ENCODE measurements at regions of chr11 and their contacts with region 1.

Region 1: GRCh38 chr11:65095974-65096806 is at the start of gene VPS51:
- DNase-seq: peak; percentile 88
- ATAC-seq: peak; percentile 97
- H3K4me3 ChIP-seq: peak within 1 kb of the TSS; percentile 74 to 78
- H3K27ac ChIP-seq: peak within 1 kb of the TSS; percentile 63
- H3K4me1 ChIP-seq: peaks cover 3 to 12% of the 10 kb centered on the region in 2 experiments; a peak in 3 of 4 replicates
- H3K27me3 ChIP-seq: no peaks in the 10 kb centered on the region
- CTCF ChIP-seq: no peak
- POLR2A ChIP-seq: peak; percentile 94
- RAD21 ChIP-seq: no peak
- total RNA-seq, gene VPS51: 89.5 TPM

Region 2: GRCh38 chr11:65083834-65084597 is 12.2 kb before region 1 on chr11 and contains the starts of genes CDCA5 and ZFPL1:
- CTCF ChIA-PET with region 1: no interaction called
- POLR2A ChIA-PET with region 1: no interaction called
- RAD21 ChIA-PET with region 1: no interaction called
- intact Hi-C with region 1: loop called (anchors 1 kb)
- DNase-seq: peak; percentile 91
- ATAC-seq: peak; percentile 85
- H3K4me3 ChIP-seq: peak within 1 kb of the TSS; percentile 86 to 98
- H3K27ac ChIP-seq: peak within 1 kb of the TSS; percentile 82
- H3K4me1 ChIP-seq: peaks cover 7 to 22% of the 10 kb centered on the region in 2 experiments; a peak in 3 of 4 replicates
- H3K27me3 ChIP-seq: no peaks in the 10 kb centered on the region
- CTCF ChIP-seq: no peak
- POLR2A ChIP-seq: peak; percentile 49
- RAD21 ChIP-seq: no peak
- total RNA-seq, gene CDCA5: 72.1 TPM
- total RNA-seq, gene ZFPL1: 35.3 TPM

Region 3: DNA sequence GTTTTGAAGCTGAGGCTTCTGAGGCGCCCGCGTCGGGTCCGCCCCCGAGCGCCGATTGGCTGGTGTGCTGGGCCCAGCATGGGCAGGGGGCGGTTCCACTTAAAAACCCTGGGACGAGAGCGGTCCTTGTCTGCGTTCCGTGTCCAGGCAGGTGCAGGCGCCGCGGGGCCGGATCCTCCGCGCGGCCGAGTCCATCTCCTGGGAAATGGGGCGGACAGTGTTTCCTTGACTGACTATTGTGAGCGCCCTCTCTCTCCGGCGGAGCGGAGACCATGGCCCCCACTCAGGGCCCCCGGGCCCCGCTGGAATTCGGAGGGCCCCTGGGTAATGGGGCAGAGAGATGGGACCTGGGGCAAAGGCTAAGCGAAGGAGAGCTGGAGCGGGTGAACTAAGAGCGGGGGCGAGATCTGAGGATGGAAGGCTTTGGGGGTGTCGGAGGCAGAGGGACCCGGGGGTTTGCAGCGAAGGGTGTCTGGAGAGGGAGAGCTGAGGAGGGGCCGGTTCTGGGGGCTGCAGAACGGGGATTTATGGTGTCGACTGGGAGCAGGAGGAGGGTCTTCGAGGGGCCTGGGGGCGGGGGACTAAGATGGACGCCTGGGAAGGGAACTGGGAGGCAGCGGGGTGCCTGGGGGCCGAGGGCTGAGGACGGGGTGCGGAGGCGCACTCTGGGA is 15.7 kb after region 1 on chr11 and contains the start of gene TM7SF2:
- CTCF ChIA-PET with region 1: interaction called, 20 read pairs
- POLR2A ChIA-PET with region 1: interaction called, 21 read pairs
- RAD21 ChIA-PET with region 1: no interaction called
- intact Hi-C with region 1: no loop called
- DNase-seq: peak; percentile 89
- ATAC-seq: peak; percentile 81
- H3K4me3 ChIP-seq: peak within 1 kb of the TSS; percentile 66 to 76
- H3K27ac ChIP-seq: peak within 1 kb of the TSS; percentile 82
- H3K4me1 ChIP-seq: peaks cover 22 to 50% of the 10 kb centered on the region in 2 experiments
- H3K27me3 ChIP-seq: no peaks in the 10 kb centered on the region
- CTCF ChIP-seq: no peak
- POLR2A ChIP-seq: peak; percentile 99
- RAD21 ChIP-seq: no peak
- total RNA-seq, gene TM7SF2: 52.9 TPM

Region 4: GRCh38 chr11:65180877-65181568 is 84.8 kb after region 1 on chr11:
- CTCF ChIA-PET with region 1: no interaction called
- POLR2A ChIA-PET with region 1: no interaction called
- RAD21 ChIA-PET with region 1: no interaction called
- intact Hi-C with region 1: no loop called
- DNase-seq: peak; percentile 29
- ATAC-seq: peak; percentile 66
- H3K4me3 ChIP-seq: peak overlapping the region; percentile 81 to 95
- H3K27ac ChIP-seq: peak overlapping the region; percentile 100
- H3K4me1 ChIP-seq: peaks cover 23 to 35% of the 10 kb centered on the region in 2 experiments
- H3K27me3 ChIP-seq: no peaks in the 10 kb centered on the region
- CTCF ChIP-seq: peak in 2 of 3 experiments; percentile 49 to 56; a peak in 5 of 6 replicates
- POLR2A ChIP-seq: no peak
- RAD21 ChIP-seq: peak; percentile 86

Region 5: GRCh38 chr11:65779851-65780577 is 683.8 kb after region 1 on chr11:
- CTCF ChIA-PET with region 1: no interaction called
- POLR2A ChIA-PET with region 1: no interaction called
- RAD21 ChIA-PET with region 1: no interaction called
- intact Hi-C with region 1: no loop called
- DNase-seq: peak; percentile 64
- ATAC-seq: peak; percentile 76
- H3K4me3 ChIP-seq: peak overlapping the region; percentile 88 to 91
- H3K27ac ChIP-seq: peak overlapping the region; percentile 98
- H3K4me1 ChIP-seq: peaks cover 12 to 38% of the 10 kb centered on the region in 2 experiments; a peak in 3 of 4 replicates
- H3K27me3 ChIP-seq: no peaks in the 10 kb centered on the region
- CTCF ChIP-seq: peak in 2 of 3 experiments; percentile 97 to 99; a peak in 4 of 6 replicates
- POLR2A ChIP-seq: no peak
- RAD21 ChIP-seq: no peak

Measured in HCT116 (cell line).